GM12878 (cell line): ENCODE measurements at regions of chr2 and their contacts with region 1.

Region 1: GRCh38 chr2:98835831-98836385 is 100.1 kb downstream of the CRACDL start:
- DNase-seq: peak; percentile 4
- ATAC-seq: peak; percentile 85
- H3K4me3 ChIP-seq: no peak overlapping the region
- H3K27ac ChIP-seq: no peak overlapping the region
- H3K4me1 ChIP-seq: no peaks in the 10 kb centered on the region
- H3K27me3 ChIP-seq: no peaks in the 10 kb centered on the region
- CTCF ChIP-seq: no peak
- EP300 ChIP-seq: peak in 1 of 2 experiments; percentile 68; a peak in 1 of 4 replicates
- POLR2A ChIP-seq: no peak
- RAD21 ChIP-seq: no peak

Region 2: GRCh38 chr2:98568881-98569793 is 266.8 kb before region 1 on chr2:
- CTCF ChIA-PET with region 1: interaction called, 4 read pairs
- POLR2A ChIA-PET with region 1: no interaction called
- RAD21 ChIA-PET with region 1: interaction called, 4 read pairs
- SMC1A ChIA-PET with region 1: no interaction called
- in situ Hi-C with region 1: no loop called
- intact Hi-C with region 1: loop called (anchors 1 kb)
- DNase-seq: no peak
- ATAC-seq: peak; percentile 97
- H3K4me3 ChIP-seq: no peak overlapping the region
- H3K27ac ChIP-seq: no peak overlapping the region
- H3K4me1 ChIP-seq: no peaks in the 10 kb centered on the region
- H3K27me3 ChIP-seq: no peaks in the 10 kb centered on the region
- CTCF ChIP-seq: peak; percentile 83 to 96 (median 94)
- EP300 ChIP-seq: no peak
- POLR2A ChIP-seq: no peak
- RAD21 ChIP-seq: peak; percentile 55

Region 3: GRCh38 chr2:98771721-98772524 is 64.0 kb before region 1 on chr2:
- CTCF ChIA-PET with region 1: interaction called, 6 read pairs
- POLR2A ChIA-PET with region 1: no interaction called
- RAD21 ChIA-PET with region 1: interaction called, 3 read pairs
- SMC1A ChIA-PET with region 1: interaction called, 3 read pairs
- in situ Hi-C with region 1: no loop called
- intact Hi-C with region 1: loop called (anchors 5 kb)
- DNase-seq: no peak
- ATAC-seq: peak; percentile 66
- H3K4me3 ChIP-seq: peak overlapping the region; percentile 26; the same call in 1 of the 2 replicates
- H3K27ac ChIP-seq: peak overlapping the region; percentile 63
- H3K4me1 ChIP-seq: peaks cover 16% of the 10 kb centered on the region
- H3K27me3 ChIP-seq: no peaks in the 10 kb centered on the region
- CTCF ChIP-seq: no peak
- EP300 ChIP-seq: no peak
- POLR2A ChIP-seq: peak; percentile 41; the same call in 1 of the 2 replicates
- RAD21 ChIP-seq: no peak

Region 4: DNA sequence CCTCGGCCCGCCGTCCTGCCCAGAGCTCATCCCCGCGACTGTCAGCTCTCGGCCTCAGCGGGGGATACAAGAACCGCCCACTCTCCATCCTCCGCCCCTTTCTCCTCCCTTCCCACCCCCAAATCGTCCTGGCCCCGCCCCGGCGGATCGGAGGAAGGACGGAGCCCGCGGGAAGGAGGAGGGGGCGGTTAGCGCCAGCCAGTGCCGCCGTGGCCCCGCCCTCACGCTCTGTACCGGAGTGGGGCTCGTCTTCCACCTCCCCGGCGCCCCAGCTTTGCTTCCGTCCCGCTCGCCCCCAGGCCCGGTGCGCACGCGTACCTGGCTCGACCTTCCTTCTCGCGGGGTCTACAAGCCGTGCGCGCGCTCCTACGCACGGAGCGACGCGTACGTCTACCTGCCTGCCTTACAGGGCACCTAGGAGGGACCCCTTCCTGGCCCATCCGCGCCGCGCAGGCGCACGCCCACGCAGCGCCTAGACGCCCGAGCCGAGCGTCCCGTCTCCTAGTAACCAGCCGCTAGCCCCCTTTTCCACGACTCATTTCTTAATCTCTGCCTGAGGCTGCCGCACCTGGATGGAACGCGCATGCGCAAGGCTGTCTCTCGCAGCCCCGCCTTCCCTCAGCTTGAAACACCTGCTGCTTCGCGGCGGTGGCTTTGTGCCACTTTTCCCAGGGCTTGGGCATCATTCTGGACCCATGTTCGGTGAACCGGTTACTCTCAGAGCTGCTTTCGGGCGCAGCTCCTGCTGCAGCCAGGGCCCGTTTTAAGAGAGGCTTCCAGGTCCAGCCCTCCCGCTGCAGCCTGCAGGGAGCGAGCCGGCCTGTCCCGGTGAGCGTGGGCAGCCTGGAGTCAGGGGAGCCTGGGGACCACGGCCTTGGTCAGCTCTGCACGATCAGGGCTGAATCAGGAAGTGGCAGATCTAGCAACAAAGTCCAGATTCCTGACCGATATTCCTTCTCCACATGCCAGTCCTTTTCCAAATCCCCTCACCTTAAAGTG is 305.5 kb after region 1 on chr2 and contains the start of gene C2orf15:
- CTCF ChIA-PET with region 1: no interaction called
- POLR2A ChIA-PET with region 1: no interaction called
- RAD21 ChIA-PET with region 1: no interaction called
- SMC1A ChIA-PET with region 1: no interaction called
- in situ Hi-C with region 1: no loop called
- intact Hi-C with region 1: no loop called
- DNase-seq: peak; percentile 80
- ATAC-seq: peak; percentile 94
- H3K4me3 ChIP-seq: peak within 1 kb of the TSS; percentile 77
- H3K27ac ChIP-seq: peak within 1 kb of the TSS; percentile 55
- H3K4me1 ChIP-seq: peaks cover 10% of the 10 kb centered on the region
- H3K27me3 ChIP-seq: no peaks in the 10 kb centered on the region
- CTCF ChIP-seq: no peak
- EP300 ChIP-seq: no peak
- POLR2A ChIP-seq: peak; percentile 89
- RAD21 ChIP-seq: no peak
- polyA plus RNA-seq, gene C2orf15: 1.7 to 2.3 TPM